ENCODE measurements at regions of chr13 and their contacts with region 1.

Region 1: GRCh38 chr13:85806553-85807175 is 7.4 kb upstream of the SLITRK6 start:
- DNase-seq: no peak
- ATAC-seq: peak in 1 of 8 donors; percentile 41
- H3K4me3 ChIP-seq: no peak overlapping the region
- H3K27ac ChIP-seq: no peak overlapping the region
- H3K4me1 ChIP-seq: no peaks in the 10 kb centered on the region
- H3K27me3 ChIP-seq: no peaks in the 10 kb centered on the region
- CTCF ChIP-seq: peak; percentile 8 to 68 (median 59)

Region 2: DNA sequence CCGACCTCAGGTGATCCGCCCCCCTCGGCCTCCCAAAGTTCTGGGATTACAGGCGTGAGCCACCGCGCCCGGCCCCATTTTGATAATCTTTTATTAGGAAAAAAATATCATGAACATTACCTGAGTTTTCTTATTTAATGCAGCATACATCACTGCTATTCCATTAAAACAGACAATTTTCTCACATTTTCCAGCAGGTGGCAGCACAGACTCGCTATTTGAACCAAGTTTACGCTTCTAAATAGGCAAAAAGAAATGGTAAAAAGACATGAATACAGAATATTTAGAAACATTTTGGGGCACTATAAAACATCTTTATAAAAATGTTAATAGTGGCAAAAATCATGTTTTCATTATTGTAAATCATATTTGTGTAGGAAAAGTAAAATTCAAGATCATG is 910.5 kb before region 1 on chr13:
- intact Hi-C with region 1: loop called in 7 of 10 experiments (anchors 5 to 10 kb)
- DNase-seq: no peak
- ATAC-seq: no peak
- H3K4me3 ChIP-seq: no peak overlapping the region
- H3K27ac ChIP-seq: no peak overlapping the region
- H3K4me1 ChIP-seq: no peaks in the 10 kb centered on the region
- H3K27me3 ChIP-seq: no peaks in the 10 kb centered on the region
- CTCF ChIP-seq: peak; percentile 28 to 68 (median 63)

Region 3: DNA sequence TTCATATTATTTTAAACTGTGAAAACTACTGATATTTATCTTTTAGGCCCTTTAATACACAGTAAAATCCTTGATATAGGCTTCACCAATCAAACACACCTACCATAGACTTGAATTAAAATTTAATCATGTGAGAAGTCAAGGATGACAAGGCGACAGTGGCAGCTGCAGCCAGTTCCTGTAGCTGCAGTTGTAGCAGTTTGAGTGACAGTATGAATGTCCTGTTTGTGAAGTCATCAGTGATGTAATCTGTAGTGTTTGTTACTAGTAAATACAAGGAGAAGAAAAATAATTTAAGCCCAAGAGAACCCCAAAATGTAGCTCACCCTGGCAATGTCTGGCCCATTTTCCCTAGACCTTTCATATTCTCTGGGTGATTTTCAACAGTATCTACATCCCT is 904.4 kb before region 1 on chr13:
- intact Hi-C with region 1: loop called in 7 of 10 experiments (anchors 5 to 10 kb)
- DNase-seq: no peak
- ATAC-seq: no peak
- H3K4me3 ChIP-seq: no peak overlapping the region
- H3K27ac ChIP-seq: no peak overlapping the region
- H3K4me1 ChIP-seq: no peaks in the 10 kb centered on the region
- H3K27me3 ChIP-seq: no peaks in the 10 kb centered on the region
- CTCF ChIP-seq: no peak

Region 4: DNA sequence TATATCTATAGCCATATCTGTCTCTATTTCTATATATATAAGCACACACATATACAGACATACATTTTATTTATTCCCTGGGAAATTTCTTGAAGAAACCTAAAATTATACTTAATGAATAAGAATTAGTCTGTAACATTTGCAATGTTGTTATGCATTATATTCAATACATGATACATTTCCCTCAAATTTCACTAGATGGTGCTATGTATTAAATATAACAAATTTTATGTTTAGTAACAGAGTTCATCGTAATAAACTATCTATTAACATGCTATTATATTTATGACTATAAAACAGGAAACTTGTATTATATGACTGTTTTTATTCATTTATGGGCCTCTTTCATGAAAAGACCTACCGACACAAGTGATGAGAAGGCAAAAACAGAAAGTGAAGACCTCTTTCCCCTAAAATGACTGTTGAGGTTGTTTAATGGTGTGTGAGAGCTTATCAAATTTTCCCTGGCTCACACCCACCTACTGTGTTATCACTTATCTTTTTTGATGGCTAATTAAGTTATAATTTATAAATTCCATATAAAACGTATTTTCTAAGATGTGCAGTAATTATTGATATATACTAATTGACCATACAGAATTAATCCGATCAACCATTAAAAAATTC is 889.3 kb before region 1 on chr13:
- intact Hi-C with region 1: loop called in 7 of 10 experiments (anchors 5 to 10 kb)
- DNase-seq: no peak
- ATAC-seq: no peak
- H3K4me3 ChIP-seq: no peak overlapping the region
- H3K27ac ChIP-seq: no peak overlapping the region
- H3K4me1 ChIP-seq: no peaks in the 10 kb centered on the region
- H3K27me3 ChIP-seq: no peaks in the 10 kb centered on the region
- CTCF ChIP-seq: peak in 7 of 9 donors; percentile 21 to 55 (median 39)

Region 5: GRCh38 chr13:85833921-85834320 is 27.3 kb after region 1 on chr13:
- intact Hi-C with region 1: no loop called
- DNase-seq: no peak
- ATAC-seq: no peak
- H3K4me3 ChIP-seq: no peak overlapping the region
- H3K27ac ChIP-seq: no peak overlapping the region
- H3K4me1 ChIP-seq: no peaks in the 10 kb centered on the region
- H3K27me3 ChIP-seq: no peaks in the 10 kb centered on the region
- CTCF ChIP-seq: no peak

Region 6: DNA sequence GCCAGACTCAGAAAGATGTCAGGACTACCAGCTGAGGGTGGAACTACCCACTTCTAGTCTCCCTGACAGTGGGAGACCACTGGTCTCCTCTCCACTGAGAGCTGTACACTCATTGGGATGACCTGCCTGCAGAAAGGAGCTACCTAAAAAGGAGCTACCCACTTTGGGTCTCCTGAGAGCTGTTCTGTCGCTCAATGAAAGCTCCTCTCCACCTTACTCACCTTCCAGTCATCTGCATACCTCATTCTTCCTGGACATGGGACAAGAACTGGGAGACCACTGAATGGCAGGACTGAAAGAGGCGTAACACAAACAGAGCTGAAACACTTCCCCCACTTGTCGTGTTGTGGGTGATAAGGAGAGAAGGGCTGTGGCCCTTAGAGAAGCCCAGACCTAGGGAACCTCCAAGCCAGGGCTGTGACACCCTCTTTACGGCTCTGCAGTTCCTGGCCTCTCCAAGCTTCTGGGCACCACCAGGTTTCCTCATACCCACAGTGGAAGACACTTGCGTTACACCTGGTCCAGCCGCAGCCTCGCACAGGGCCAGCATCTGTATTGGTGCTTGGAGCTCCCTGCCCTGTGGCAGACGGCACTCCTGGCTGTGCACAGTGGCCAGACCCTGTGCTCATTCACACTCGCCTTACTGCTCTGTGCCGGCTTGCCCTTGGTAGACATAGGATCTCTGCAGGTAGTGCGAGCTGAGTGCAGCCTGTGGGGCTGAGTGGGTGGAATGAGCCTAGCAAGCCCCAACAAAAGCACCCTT is 47.4 kb after region 1 on chr13:
- intact Hi-C with region 1: no loop called
- DNase-seq: no peak
- ATAC-seq: no peak
- H3K4me3 ChIP-seq: no peak overlapping the region
- H3K27ac ChIP-seq: no peak overlapping the region
- H3K4me1 ChIP-seq: no peaks in the 10 kb centered on the region
- H3K27me3 ChIP-seq: no peaks in the 10 kb centered on the region
- CTCF ChIP-seq: no peak